ENCODE measurements at regions of chr9 and their contacts with region 1.

Region 1: DNA sequence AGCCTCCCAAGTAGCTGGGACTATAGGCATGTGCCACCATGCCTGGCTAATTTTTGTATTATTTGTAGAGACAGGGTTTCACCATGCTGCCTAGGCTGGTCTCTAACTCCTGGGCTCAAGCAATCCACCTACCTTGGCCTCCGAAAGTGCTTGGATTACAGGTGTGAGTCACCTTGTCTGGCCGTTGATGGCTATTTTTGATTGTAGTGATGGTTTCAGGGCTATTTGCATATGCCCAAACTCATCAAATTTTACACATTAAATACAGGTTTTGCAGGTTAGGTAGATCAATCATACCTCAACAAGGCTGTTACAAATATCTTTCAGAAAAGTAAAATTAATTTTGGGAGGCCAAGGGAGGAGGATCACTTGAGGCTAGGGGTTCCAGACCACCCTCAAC is 13.6 kb upstream of the BARHL1 start:
- DNase-seq: no peak
- H3K4me3 ChIP-seq: no peak overlapping the region
- CTCF ChIP-seq: no peak
- POLR2A ChIP-seq: no peak

Region 2: DNA sequence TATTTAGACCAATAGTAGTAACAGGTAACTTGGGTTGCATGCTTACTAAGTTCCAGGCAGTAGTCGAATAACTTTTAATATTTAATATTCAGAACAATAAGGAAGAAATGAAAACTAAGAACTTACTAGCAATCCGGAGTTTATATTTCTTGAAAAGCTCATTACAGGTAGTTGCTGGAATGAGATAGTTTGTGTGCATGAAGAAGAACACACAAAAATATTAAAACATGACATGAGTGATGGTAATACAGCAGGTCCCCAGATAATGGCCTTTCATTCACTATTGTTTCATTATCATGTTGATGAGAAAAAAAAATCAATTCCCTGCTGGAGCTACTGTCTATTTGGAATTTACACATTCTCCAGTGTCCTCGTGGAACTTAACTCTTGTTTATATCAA is 1830.5 kb before region 1 on chr9:
- intact Hi-C with region 1: loop called (anchors 5 kb)
- DNase-seq: no peak
- H3K4me3 ChIP-seq: no peak overlapping the region
- CTCF ChIP-seq: no peak
- POLR2A ChIP-seq: no peak